ENCODE measurements at regions of chr10 and their contacts with region 1.

Region 1: DNA sequence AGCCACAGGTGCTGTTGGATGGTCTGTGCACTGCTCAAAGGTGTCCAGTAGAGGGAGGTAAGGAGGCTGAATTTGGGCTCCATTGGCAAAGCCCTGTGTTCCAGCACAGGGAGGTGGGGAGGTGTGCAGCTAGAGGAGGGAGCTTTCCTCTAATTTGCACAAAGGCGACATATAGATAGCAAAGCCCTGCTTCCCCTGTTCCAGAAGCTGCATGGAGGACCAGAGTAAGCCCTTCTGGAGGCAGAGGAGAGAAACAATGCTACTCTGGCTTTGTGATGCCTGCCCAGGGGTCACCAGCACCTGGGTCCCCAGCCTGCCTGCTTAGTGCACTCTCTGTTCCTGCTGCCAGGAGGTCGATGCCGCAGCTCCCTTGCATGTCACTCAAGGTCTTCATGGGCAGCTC is 3.4 kb upstream of the ARHGAP22 start:
- DNase-seq: no peak
- H3K4me3 ChIP-seq: no peak overlapping the region
- H3K27ac ChIP-seq: peak overlapping the region; percentile 95
- H3K4me1 ChIP-seq: peaks cover 59% of the 10 kb centered on the region
- H3K27me3 ChIP-seq: no peaks in the 10 kb centered on the region
- CTCF ChIP-seq: peak; percentile 74 to 75
- POLR2A ChIP-seq: no peak

Region 2: DNA sequence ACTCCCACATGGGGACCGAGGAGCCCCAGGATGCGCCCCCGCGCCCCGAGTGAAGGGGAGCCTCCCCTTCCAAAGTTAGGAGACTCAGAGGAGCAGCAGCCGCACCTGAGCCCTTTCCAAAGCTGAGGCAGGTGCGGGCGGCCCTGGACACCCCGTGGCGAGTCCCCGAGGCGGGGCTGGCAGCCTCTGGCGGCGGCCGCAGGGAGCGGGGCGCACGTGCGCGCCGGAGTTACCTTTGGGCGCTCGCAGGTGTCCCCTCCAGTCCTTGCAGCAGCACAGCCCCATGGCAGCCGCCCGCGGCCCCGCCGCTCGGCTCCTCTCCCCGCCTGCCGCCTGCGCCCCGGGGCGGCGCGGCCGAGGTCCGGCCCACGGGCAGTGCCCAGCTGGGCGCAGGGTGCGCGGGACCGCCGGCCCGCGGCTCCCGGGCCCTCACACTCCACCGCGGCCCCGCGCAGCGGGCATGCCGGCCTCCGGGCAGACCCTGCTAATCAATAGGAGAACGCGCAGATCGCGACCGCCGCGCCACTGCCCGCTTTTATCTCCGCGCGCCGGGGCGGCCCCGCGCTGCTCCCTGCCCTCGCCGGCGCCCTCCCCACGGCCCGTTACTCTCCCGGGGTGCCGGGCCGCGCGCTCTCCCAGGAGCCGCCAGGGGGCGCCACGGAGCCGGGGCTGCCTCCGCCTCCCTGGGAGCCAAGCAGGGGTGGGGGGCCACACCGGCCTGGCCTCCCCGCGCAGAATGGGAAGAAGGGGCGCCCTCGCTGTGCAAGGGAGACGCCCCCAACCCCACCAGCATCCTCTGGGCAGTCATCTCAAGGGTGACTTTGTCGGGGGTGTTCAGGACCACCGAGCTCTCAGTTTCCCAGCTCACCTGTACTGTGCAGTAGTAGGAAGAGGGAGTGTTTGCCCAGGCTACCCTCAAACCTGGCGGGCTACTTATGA is 84.2 kb before region 1 on chr10:
- CTCF ChIA-PET with region 1: interaction called, 4 read pairs
- POLR2A ChIA-PET with region 1: no interaction called
- dilution Hi-C with region 1: no loop called
- intact Hi-C with region 1: loop called (anchors 1 kb)
- DNase-seq: no peak
- H3K4me3 ChIP-seq: peak overlapping the region in 2 of 3 experiments; percentile 30 to 54
- H3K27ac ChIP-seq: no peak overlapping the region
- H3K4me1 ChIP-seq: peaks cover 33% of the 10 kb centered on the region
- H3K27me3 ChIP-seq: no peaks in the 10 kb centered on the region
- CTCF ChIP-seq: peak; percentile 69 to 77
- POLR2A ChIP-seq: no peak

Region 3: GRCh38 chr10:48572414-48572813 is 35.9 kb before region 1 on chr10:
- CTCF ChIA-PET with region 1: interaction called, 12 read pairs
- POLR2A ChIA-PET with region 1: no interaction called
- dilution Hi-C with region 1: no loop called
- intact Hi-C with region 1: loop called (anchors 5 kb)
- DNase-seq: no peak
- H3K4me3 ChIP-seq: no peak overlapping the region
- H3K27ac ChIP-seq: no peak overlapping the region
- H3K4me1 ChIP-seq: no peaks in the 10 kb centered on the region
- H3K27me3 ChIP-seq: no peaks in the 10 kb centered on the region
- CTCF ChIP-seq: no peak
- POLR2A ChIP-seq: no peak

Region 4: GRCh38 chr10:48594803-48595538 is 13.3 kb before region 1 on chr10:
- CTCF ChIA-PET with region 1: interaction called, 21 read pairs
- POLR2A ChIA-PET with region 1: interaction called, 6 read pairs
- dilution Hi-C with region 1: no loop called
- intact Hi-C with region 1: no loop called
- DNase-seq: no peak
- H3K4me3 ChIP-seq: no peak overlapping the region
- H3K27ac ChIP-seq: no peak overlapping the region
- H3K4me1 ChIP-seq: peaks cover 5% of the 10 kb centered on the region
- H3K27me3 ChIP-seq: no peaks in the 10 kb centered on the region
- CTCF ChIP-seq: no peak
- POLR2A ChIP-seq: no peak

Region 5: GRCh38 chr10:48946891-48947500 is 338.7 kb after region 1 on chr10:
- CTCF ChIA-PET with region 1: no interaction called
- POLR2A ChIA-PET with region 1: no interaction called
- dilution Hi-C with region 1: no loop called
- intact Hi-C with region 1: loop called (anchors 5 kb)
- DNase-seq: peak; percentile 91
- H3K4me3 ChIP-seq: no peak overlapping the region
- H3K27ac ChIP-seq: peak overlapping the region; percentile 74
- H3K4me1 ChIP-seq: peaks cover 32% of the 10 kb centered on the region
- H3K27me3 ChIP-seq: no peaks in the 10 kb centered on the region
- CTCF ChIP-seq: no peak
- POLR2A ChIP-seq: no peak

Measured in endothelial cell of umbilical vein (primary cell).